ENCODE measurements at regions of chr7 and their contacts with region 1.

Region 1: DNA sequence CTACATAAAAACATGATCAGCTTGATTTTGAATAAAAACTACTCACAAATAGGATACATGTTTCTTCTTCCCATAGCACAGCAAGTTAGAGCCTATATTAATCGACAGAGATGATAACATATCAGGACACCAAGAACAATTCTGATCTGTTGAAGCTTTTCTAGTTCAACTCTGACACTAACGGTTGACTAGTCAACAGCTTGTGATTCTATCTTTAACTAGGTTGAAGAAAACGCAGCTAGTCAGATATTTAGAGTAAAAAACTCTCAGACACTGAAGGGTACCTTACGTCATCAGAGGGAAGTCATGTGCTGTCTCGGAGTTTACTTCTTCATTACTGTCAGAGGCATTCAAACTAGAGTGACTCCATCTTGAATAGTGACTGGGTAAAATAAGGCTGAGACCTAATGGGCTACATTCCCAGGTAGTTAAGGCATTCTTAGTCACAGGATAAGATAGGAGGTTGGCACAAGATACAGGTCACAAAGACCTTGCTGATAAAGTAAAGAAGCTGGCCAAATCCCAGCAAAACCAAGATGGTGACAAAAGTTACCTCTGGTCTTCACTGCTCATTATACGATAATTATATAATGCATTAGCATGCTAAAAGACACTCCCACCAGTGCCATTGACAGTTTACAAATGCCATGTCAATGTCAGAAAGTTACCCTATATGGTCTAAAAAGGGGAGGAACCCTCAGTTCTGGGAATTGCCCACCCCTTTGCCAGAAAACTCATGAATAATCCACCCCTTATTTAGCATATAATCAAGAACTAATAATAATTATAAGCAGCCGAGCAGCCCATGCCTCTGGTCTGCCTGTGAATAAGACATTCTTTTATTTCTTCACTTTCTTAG is 21.3 kb downstream of the CCDC71L start:
- DNase-seq: no peak
- H3K4me3 ChIP-seq: no peak overlapping the region
- H3K27ac ChIP-seq: no peak overlapping the region
- H3K4me1 ChIP-seq: no peaks in the 10 kb centered on the region
- H3K27me3 ChIP-seq: no peaks in the 10 kb centered on the region
- CTCF ChIP-seq: no peak

Region 2: GRCh38 chr7:105522062-105522936 is 1117.4 kb before region 1 on chr7 and contains the start of gene PUS7:
- intact Hi-C with region 1: no loop called
- DNase-seq: peak; percentile 30 to 94
- H3K4me3 ChIP-seq: peak within 1 kb of the TSS; percentile 58 to 97
- H3K27ac ChIP-seq: peak within 1 kb of the TSS; percentile 80 to 90
- H3K4me1 ChIP-seq: peaks cover 5 to 8% of the 10 kb centered on the region in 2 donors
- H3K27me3 ChIP-seq: no peaks in the 10 kb centered on the region
- CTCF ChIP-seq: no peak
- total RNA-seq, gene PUS7: 17.2 TPM

Region 3: DNA sequence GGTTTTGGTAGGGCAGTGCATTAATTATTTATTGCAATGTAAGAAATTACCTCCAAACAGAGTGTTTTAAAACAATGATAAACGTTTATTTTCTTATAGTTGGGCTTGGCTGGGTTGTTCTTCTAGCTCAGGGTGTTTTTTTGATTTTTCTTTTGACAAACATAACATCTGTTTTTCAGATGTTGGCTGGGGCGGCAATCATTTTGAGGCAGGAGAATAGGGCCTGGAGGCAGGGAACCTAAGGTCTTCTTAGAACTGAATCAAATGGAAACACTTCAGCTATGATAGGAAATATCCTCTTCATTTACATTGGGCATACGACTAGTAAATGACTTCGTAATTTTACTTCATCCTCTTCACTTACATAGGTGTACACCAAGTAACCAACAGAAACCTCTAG is 307.5 kb before region 1 on chr7:
- intact Hi-C with region 1: no loop called
- DNase-seq: no peak
- H3K4me3 ChIP-seq: no peak overlapping the region
- H3K27ac ChIP-seq: no peak overlapping the region
- H3K4me1 ChIP-seq: peaks cover 4 to 6% of the 10 kb centered on the region in 2 donors
- H3K27me3 ChIP-seq: no peaks in the 10 kb centered on the region
- CTCF ChIP-seq: no peak

Region 4: GRCh38 chr7:106681815-106682495 is 42.2 kb after region 1 on chr7:
- intact Hi-C with region 1: loop called (anchors 5 kb)
- DNase-seq: no peak
- H3K4me3 ChIP-seq: no peak overlapping the region
- H3K27ac ChIP-seq: no peak overlapping the region
- H3K4me1 ChIP-seq: no peaks in the 10 kb centered on the region
- H3K27me3 ChIP-seq: no peaks in the 10 kb centered on the region
- CTCF ChIP-seq: no peak

Region 5: DNA sequence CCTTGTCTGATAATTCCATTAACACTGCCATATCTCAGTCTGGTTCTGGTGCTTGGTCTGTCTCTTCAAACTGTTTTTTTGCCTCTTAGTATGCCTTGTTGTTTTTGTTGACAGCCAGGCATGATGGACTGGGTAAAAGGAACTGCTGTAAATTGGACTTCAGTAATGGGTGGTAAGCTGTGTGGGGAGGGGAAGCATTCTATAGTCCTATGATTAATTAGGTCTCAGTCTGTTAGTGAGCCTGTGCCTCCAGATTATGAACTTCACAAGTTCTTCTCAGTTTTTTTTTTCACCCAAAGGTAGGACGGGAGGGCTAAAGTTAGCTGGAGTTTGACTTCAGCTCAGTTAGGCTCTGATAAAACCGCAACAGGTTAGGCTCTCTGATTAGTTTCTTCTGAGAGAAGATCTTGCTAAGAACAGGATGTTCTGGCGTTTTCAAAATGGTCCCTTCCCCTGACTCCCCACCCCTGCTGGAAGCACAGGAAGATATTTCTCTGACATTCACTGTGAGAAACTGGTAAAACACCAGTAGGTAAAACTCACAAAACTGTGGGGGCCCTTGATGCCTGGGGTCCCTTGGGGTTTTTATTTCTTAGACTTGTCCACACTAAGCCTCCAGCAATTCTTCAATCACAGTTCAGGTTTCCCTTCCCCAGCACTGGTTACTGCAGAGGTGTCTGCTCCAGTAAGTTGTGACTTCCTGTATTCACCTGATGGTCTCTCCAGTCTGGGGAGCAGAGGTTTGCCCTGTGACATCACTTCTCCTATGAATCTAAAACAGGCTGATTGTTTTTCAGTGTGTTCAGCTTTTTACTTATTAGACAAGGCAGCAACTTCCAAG is 64.5 kb after region 1 on chr7:
- intact Hi-C with region 1: no loop called
- DNase-seq: no peak
- H3K4me3 ChIP-seq: no peak overlapping the region
- H3K27ac ChIP-seq: no peak overlapping the region
- H3K4me1 ChIP-seq: no peaks in the 10 kb centered on the region
- H3K27me3 ChIP-seq: no peaks in the 10 kb centered on the region
- CTCF ChIP-seq: no peak